Sigmoid colon (tissue), 7 donors: ENCODE measurements at regions of chr19 and their contacts with region 1.

Region 1: DNA sequence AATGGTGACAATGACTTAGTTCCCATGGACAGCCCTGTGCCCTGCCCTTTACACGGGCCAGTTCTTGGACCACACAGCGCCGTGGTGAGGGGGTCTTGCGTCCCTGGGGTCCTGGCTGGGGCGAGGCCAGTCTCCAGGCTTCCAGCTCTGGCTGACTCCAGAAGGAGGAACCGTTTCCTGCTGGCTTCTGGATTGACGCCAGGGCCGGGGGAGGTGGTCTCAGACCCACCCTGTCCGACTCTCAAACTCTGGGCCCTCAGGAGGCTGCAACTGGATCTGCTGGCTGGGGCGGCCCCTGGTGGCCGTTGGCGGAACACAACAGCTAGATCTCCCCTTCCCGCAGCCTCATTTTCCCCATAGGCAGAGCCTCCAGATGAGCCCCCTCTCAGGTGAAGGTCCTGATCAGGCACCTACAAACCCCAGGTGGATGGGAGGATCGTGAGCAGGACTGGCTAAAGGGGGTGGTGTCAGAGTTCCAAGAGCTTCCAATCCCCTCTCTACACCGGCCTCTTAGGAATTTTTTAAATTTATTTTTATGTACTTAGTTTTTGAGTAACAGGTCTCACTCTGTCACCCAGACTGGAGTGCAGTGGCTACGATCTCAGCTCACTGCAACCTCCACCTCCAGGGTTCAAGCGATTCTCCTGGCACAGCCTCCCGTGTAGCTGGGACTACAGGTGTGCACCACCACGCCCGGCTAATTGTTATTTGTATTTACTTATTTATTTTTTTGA is 8.0 kb downstream of the CCDC194 start:
- DNase-seq: peak; percentile 79
- H3K4me3 ChIP-seq: no peak overlapping the region
- H3K27ac ChIP-seq: no peak overlapping the region
- H3K4me1 ChIP-seq: peaks cover 0 to 10% (median 7%) of the 10 kb centered on the region in 4 donors
- H3K27me3 ChIP-seq: no peaks in the 10 kb centered on the region
- CTCF ChIP-seq: peak; percentile 58 to 92 (median 82)
- EP300 ChIP-seq: no peak
- POLR2A ChIP-seq: no peak

Region 2: DNA sequence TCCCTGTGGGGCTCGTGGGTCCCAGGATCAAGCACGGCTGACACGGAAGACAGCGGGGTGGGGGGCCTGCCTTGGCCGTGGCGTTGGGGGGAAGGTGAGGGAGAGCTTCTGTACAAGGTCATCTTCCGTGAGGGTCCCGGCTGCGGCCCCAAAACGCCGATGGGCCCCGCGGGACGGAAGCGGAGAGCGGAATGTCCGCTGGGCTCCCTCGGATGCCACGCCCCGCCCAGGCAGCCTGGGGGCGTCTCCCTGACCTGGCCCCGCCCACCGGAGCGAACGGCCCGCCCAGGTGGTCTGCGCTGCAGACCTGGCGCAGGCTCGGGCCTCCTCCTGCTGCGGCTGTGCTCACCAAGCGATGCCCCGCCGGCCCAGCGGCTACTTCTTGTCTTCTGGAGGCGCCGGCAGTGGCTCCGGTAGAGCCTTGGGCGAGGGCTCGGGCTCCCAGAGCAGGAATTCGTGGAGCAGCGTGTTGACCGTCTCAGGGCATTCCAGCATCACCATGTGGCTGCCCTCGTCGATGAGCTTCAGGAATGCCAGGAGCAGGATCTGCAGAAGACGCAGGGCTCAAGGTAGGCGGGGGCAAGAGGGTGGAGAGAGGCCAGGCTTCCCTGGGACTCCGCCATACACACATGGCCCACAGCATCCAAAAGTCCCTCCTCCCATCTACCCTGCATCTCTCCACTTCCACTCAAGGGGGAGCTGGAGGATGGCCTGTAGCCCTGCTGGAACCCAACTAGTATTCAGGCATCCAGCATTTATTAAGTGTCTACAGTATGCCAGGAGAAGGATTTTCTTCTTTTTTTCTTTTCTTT is 93.6 kb before region 1 on chr19:
- intact Hi-C with region 1: loop called (anchors 5 kb)
- DNase-seq: peak; percentile 87
- H3K4me3 ChIP-seq: peak overlapping the region; percentile 23 to 55 (median 42)
- H3K27ac ChIP-seq: peak overlapping the region; percentile 67 to 82 (median 75)
- H3K4me1 ChIP-seq: peaks cover 0 to 20% (median 14%) of the 10 kb centered on the region in 4 donors
- H3K27me3 ChIP-seq: no peaks in the 10 kb centered on the region
- CTCF ChIP-seq: peak; percentile 44 to 70 (median 54)
- EP300 ChIP-seq: no peak
- POLR2A ChIP-seq: no peak

Region 3: GRCh38 chr19:17346109-17346671 is 39.9 kb before region 1 on chr19:
- intact Hi-C with region 1: loop called (anchors 1 kb)
- DNase-seq: peak; percentile 83
- H3K4me3 ChIP-seq: no peak overlapping the region
- H3K27ac ChIP-seq: peak overlapping the region in 3 of 4 donors; percentile 34 to 53 (median 39)
- H3K4me1 ChIP-seq: peaks cover 0 to 25% (median 12%) of the 10 kb centered on the region in 4 donors
- H3K27me3 ChIP-seq: peaks cover 0 to 17% (median 0%) of the 10 kb centered on the region in 3 donors
- CTCF ChIP-seq: peak; percentile 91 to 96 (median 94)
- EP300 ChIP-seq: no peak
- POLR2A ChIP-seq: no peak

Region 4: DNA sequence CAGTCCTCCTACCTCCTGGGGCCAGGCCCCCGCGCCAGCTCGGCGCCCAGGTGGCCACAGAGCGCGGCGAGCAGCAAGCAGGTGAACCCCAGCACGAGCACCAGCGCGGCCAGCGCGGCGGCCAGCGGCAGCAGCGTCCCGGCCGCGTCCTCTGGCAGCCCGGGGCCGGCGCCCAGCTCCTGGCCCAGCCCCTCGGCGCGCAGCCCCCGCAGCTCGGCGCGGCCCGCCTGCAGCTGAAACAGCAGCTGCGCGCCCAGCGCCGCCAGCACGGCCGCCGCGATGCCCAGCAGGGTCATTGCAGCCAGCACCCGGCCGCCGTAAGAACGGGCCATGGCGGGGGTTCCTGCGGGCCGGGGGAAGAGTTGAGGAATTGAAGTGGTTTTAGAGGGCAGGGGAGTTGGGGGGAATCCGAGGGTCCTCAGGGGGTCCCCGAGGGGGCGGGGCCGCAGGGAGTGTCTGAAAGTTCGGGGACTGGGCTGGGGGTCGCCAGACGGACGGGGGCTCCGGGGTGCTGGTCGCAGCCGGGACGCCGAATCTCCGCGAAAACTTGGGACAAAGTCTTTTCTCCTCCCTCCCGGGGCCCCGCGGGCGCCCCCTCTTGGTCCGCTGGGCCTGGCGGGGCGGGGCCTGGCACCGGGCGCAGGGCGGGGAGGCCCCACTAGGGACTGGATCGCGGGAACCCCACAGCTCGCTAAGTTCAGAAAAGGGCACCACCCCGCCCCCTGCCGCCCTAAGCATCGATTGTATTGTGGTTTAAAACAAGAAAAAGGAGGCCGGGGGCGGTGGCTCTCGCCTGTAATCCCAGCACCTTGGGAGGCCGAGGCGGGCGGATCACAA is 62.3 kb after region 1 on chr19 and contains the start of gene TMEM221:
- intact Hi-C with region 1: no loop called
- DNase-seq: peak; percentile 81
- H3K4me3 ChIP-seq: peak within 1 kb of the TSS; percentile 41 to 62 (median 50)
- H3K27ac ChIP-seq: peak within 1 kb of the TSS in 1 of 4 donors; percentile 48
- H3K4me1 ChIP-seq: peaks cover 0 to 14% (median 8%) of the 10 kb centered on the region in 4 donors
- H3K27me3 ChIP-seq: no peaks in the 10 kb centered on the region
- CTCF ChIP-seq: peak; percentile 10 to 60 (median 20)
- EP300 ChIP-seq: no peak
- POLR2A ChIP-seq: no peak
- total RNA-seq, gene TMEM221: 0.36 to 1.8 (median 1.7) TPM in 3 of 4 donors, not detected in the other